CD8-positive, alpha-beta memory T cell (primary cell): ENCODE measurements at regions of chr1 and their contacts with region 1.

Region 1: DNA sequence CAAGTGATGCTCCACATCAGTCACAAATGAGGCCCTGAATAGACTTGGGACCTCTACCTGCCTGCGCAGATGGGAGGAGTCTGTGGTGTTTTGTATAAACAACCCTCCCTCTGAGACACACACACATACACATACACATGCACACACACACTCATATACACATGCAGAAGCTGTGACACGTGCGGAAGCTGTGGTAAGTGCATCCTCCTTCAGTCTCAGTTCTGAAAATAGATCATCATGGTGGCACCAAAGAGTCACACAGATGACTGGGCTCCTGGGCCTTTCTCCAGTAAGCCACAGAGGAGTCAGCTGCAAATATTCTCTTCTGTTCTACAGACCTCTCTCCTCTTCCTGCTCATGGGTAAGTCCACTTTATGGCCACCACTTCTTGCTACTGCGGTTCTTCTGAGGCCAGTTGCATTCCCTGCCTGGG is at the start of gene LY9:
- DNase-seq: peak; percentile 65 to 93 (median 92)
- H3K4me3 ChIP-seq: peak within 1 kb of the TSS; percentile 80
- H3K4me3 Mint-ChIP-seq: peak within 1 kb of the TSS; percentile 96 to 99 (median 97)
- H3K27ac ChIP-seq: peak within 1 kb of the TSS; percentile 69
- H3K27ac Mint-ChIP-seq: peak within 1 kb of the TSS; percentile 92 to 98 (median 97)
- H3K4me1 ChIP-seq: peaks cover 34% of the 10 kb centered on the region
- H3K4me1 Mint-ChIP-seq: peaks cover 55 to 62% (median 57%) of the 10 kb centered on the region in 3 donors
- H3K27me3 ChIP-seq: no peaks in the 10 kb centered on the region
- H3K27me3 Mint-ChIP-seq: no peaks in the 10 kb centered on the region
- total RNA-seq, gene LY9: 16.4 to 16.5 TPM

Region 2: GRCh38 chr1:160058087-160058486 is 737.9 kb before region 1 on chr1:
- CTCF ChIA-PET with region 1: no interaction called
- POLR2A ChIA-PET with region 1: no interaction called
- DNase-seq: no peak
- H3K4me3 ChIP-seq: no peak overlapping the region
- H3K4me3 Mint-ChIP-seq: no peak overlapping the region
- H3K27ac ChIP-seq: no peak overlapping the region
- H3K27ac Mint-ChIP-seq: no peak overlapping the region
- H3K4me1 ChIP-seq: no peaks in the 10 kb centered on the region
- H3K4me1 Mint-ChIP-seq: no peaks in the 10 kb centered on the region
- H3K27me3 ChIP-seq: no peaks in the 10 kb centered on the region
- H3K27me3 Mint-ChIP-seq: peaks cover 28 to 83% of the 10 kb centered on the region in 2 donors

Region 3: GRCh38 chr1:160777486-160778089 is 18.4 kb before region 1 on chr1:
- CTCF ChIA-PET with region 1: interaction called, 16 read pairs
- POLR2A ChIA-PET with region 1: interaction called, 5 read pairs
- DNase-seq: peak in 4 of 5 donors; percentile 31 to 64 (median 62)
- H3K4me3 ChIP-seq: no peak overlapping the region
- H3K4me3 Mint-ChIP-seq: peak overlapping the region in 1 of 7 donors; percentile 21
- H3K27ac ChIP-seq: no peak overlapping the region
- H3K27ac Mint-ChIP-seq: peak overlapping the region in 3 of 8 donors; percentile 45 to 90 (median 70)
- H3K4me1 ChIP-seq: peaks cover 7% of the 10 kb centered on the region
- H3K4me1 Mint-ChIP-seq: peaks cover 16 to 27% (median 26%) of the 10 kb centered on the region in 3 donors
- H3K27me3 ChIP-seq: no peaks in the 10 kb centered on the region
- H3K27me3 Mint-ChIP-seq: no peaks in the 10 kb centered on the region

Region 4: DNA sequence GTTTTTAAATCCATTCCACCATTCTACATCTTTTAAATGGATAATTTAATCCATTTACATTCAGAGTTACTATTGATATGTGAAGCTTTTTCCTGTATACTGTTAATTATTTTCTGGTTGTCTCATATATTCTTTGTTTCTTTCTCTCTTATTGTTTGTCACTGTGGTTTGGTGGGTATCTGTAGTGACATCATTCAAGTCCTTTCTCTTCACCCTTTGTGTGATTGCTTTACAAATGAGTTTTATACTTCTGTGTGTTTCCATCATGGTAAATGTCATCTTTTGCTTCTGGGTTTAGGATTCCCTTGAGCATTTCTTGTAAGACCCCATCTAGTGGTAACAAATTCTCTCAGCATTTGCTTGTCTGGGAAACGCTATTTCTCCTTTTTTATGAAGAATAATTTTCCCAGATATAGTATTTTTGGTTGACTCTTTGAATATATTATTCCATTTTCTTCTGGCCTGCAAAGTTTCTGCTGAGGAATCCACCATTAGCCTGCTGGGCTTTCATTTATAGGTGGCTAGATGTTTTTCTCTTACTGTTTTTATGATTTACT is 10.2 kb after region 1 on chr1:
- CTCF ChIA-PET with region 1: interaction called, 15 read pairs
- POLR2A ChIA-PET with region 1: interaction called, 6 read pairs
- DNase-seq: no peak
- H3K4me3 ChIP-seq: no peak overlapping the region
- H3K4me3 Mint-ChIP-seq: peak overlapping the region; percentile 17 to 73 (median 53)
- H3K27ac ChIP-seq: no peak overlapping the region
- H3K27ac Mint-ChIP-seq: peak overlapping the region in 7 of 8 donors; percentile 43 to 75 (median 66)
- H3K4me1 ChIP-seq: peaks cover 50% of the 10 kb centered on the region
- H3K4me1 Mint-ChIP-seq: peaks cover 74 to 92% (median 90%) of the 10 kb centered on the region in 3 donors
- H3K27me3 ChIP-seq: no peaks in the 10 kb centered on the region
- H3K27me3 Mint-ChIP-seq: no peaks in the 10 kb centered on the region

Region 5: DNA sequence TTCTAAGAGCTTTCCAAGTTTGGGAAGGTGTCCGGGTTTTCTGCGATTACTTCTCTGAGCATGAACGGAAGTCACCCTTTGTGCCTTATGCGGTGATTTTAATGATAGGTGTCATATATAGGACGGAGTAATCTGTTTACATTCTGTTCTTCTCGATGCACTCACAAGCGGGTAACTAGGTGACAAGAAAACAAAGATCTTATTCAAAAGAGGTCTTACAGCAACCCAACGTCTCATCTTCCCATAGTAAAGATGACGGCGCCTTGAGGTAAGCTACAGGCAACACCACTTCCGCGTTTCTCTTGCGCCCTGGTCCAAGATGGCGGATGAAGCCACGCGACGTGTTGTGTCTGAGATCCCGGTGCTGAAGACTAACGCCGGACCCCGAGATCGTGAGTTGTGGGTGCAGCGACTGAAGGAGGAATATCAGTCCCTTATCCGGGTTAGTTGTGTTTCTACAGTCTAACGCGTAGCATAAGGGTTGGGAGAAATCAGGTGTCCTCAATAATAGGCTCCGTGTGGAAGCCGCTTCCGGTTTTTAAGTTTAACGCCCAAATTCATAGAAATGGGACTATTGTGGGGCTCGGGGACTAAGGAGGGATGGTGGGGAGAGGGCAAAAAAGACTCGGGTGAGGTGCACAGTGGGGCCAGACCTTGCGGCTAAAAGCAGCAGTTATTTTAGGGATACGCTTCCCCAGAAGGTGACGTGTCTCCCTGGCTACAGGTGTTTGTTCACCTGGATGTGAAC is 357.9 kb after region 1 on chr1 and contains the start of gene UFC1:
- CTCF ChIA-PET with region 1: no interaction called
- POLR2A ChIA-PET with region 1: interaction called, 10 read pairs
- DNase-seq: peak; percentile 68 to 90 (median 88)
- H3K4me3 ChIP-seq: peak within 1 kb of the TSS; percentile 87
- H3K4me3 Mint-ChIP-seq: peak within 1 kb of the TSS; percentile 98 to 100 (median 98)
- H3K27ac ChIP-seq: peak within 1 kb of the TSS; percentile 98
- H3K27ac Mint-ChIP-seq: peak within 1 kb of the TSS; percentile 98 to 100 (median 100)
- H3K4me1 ChIP-seq: peaks cover 14% of the 10 kb centered on the region
- H3K4me1 Mint-ChIP-seq: peaks cover 25 to 45% (median 34%) of the 10 kb centered on the region in 3 donors
- H3K27me3 ChIP-seq: no peaks in the 10 kb centered on the region
- H3K27me3 Mint-ChIP-seq: no peaks in the 10 kb centered on the region
- total RNA-seq, gene UFC1: 109 to 118 TPM